CD8-positive, alpha-beta T cell (primary cell): ENCODE measurements at regions of chr3 and their contacts with region 1.

Region 1: DNA sequence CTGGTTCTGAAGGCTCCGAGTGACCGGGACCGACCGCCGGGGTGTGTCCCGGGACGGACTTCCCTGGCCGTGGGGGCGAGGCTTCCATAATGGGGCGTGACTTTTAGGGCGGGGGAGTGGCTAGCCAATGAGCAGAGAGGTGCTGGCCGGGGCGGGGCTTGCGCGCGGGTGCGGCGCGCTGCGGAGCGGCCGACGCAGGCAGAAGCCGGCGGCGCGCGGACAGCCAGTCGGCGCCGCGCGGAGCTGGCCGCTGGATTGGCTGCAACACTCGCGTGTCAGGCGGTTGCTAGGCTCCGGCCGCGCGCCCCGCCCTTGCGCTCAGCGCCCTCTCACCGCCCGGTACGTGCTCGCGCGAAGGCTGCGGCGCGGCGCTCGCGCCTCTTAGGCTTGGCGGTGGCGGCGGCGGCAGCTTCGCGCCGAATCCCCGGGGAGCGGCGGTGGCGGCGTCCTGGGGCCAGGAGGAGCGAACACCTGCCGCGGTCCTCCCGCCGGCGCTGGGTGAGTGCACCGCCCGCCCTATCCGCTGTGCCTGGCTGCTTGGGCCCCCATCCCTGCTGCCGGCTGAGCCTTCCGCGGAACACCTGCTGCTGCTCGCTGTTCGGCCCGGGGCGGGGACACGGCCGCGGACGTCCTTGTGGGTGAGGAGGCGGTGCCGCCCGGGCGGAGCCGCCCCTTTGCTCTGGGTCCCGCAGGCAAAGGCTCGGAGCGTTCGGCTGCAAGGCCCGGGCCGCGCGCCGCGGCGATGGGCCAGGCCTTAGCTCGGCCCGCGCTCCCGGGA is at the start of gene DAG1:
- DNase-seq: peak; percentile 89 to 99 (median 95)
- ATAC-seq: peak; percentile 85
- H3K4me3 ChIP-seq: peak within 1 kb of the TSS; percentile 83 to 97
- H3K4me3 Mint-ChIP-seq: peak within 1 kb of the TSS; percentile 88
- H3K27ac ChIP-seq: peak within 1 kb of the TSS; percentile 86 to 87
- H3K27ac Mint-ChIP-seq: peak within 1 kb of the TSS; percentile 94
- H3K4me1 ChIP-seq: peaks cover 21% of the 10 kb centered on the region
- H3K4me1 Mint-ChIP-seq: peaks cover 24% of the 10 kb centered on the region
- H3K27me3 ChIP-seq: no peaks in the 10 kb centered on the region
- H3K27me3 Mint-ChIP-seq: no peaks in the 10 kb centered on the region
- CTCF ChIP-seq: no peak
- total RNA-seq, gene DAG1: 17.0 to 19.9 TPM

Region 2: GRCh38 chr3:49171119-49171774 is 298.9 kb before region 1 on chr3 and contains the start of gene KLHDC8B:
- CTCF ChIA-PET with region 1: no interaction called
- POLR2A ChIA-PET with region 1: no interaction called
- intact Hi-C with region 1: no loop called
- DNase-seq: peak; percentile 68 to 90 (median 84)
- ATAC-seq: peak; percentile 85
- H3K4me3 ChIP-seq: peak within 1 kb of the TSS; percentile 72 to 88
- H3K4me3 Mint-ChIP-seq: peak within 1 kb of the TSS; percentile 89
- H3K27ac ChIP-seq: peak within 1 kb of the TSS; percentile 3 to 40
- H3K27ac Mint-ChIP-seq: peak within 1 kb of the TSS; percentile 79
- H3K4me1 ChIP-seq: peaks cover 24% of the 10 kb centered on the region
- H3K4me1 Mint-ChIP-seq: peaks cover 25% of the 10 kb centered on the region
- H3K27me3 ChIP-seq: no peaks in the 10 kb centered on the region
- H3K27me3 Mint-ChIP-seq: no peaks in the 10 kb centered on the region
- CTCF ChIP-seq: peak; percentile 97
- total RNA-seq, gene KLHDC8B: 1.1 to 1.6 TPM

Region 3: GRCh38 chr3:49428697-49429100 is 41.4 kb before region 1 on chr3:
- CTCF ChIA-PET with region 1: no interaction called
- POLR2A ChIA-PET with region 1: interaction called, 6 read pairs
- intact Hi-C with region 1: loop called (anchors 1 kb)
- DNase-seq: no peak
- ATAC-seq: peak; percentile 2
- H3K4me3 ChIP-seq: peak overlapping the region; percentile 63 to 85
- H3K4me3 Mint-ChIP-seq: peak overlapping the region; percentile 89
- H3K27ac ChIP-seq: peak overlapping the region; percentile 70 to 86
- H3K27ac Mint-ChIP-seq: peak overlapping the region; percentile 89
- H3K4me1 ChIP-seq: peaks cover 10% of the 10 kb centered on the region
- H3K4me1 Mint-ChIP-seq: peaks cover 14% of the 10 kb centered on the region
- H3K27me3 ChIP-seq: no peaks in the 10 kb centered on the region
- H3K27me3 Mint-ChIP-seq: no peaks in the 10 kb centered on the region
- CTCF ChIP-seq: no peak

Region 4: DNA sequence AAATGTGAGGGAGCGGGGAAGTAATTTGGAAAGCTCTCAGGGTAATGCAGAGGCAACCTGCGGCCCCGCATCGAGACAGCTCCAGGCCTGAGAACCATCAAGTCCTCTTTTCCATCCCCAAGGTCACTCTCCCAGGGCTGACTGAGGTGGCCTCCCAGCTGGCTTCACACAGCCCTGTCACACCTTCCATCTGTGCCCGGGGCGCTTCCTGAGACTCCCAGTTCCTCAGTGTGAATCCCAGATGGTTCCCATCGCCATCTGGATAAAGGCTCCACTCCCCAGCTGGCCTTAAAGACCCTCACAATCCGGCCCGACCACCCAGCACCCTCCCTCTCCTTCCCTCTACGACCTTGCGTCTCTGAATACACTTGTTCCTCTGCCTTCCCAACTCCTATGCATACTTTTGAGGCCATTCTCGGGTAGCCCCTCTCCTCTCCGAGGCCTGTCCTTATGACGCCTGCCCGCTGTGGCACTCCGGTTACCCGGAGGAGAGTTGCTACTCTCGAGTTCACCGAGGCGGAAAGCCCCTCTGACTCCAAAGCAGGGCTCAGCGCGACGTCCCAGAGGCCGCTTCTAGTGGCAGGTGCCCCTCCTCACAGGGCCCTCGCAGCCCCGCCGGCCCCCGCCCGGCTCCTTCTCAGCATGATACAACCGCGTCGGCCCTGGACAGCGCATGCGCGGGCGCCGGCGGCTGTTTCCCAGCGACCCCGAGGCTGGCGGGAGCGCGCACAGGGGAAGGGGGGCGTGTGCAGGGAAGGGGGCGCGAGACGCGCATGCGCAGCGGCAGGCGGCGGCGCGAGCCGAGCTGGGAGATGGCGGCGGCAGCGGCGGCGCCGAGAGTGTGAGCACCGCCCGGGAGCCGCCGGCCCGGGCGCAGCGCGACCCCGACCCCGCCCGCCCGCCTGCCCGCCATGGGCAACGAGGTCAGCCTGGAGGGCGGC is 83.8 kb after region 1 on chr3 and contains the start of gene BSN:
- CTCF ChIA-PET with region 1: no interaction called
- POLR2A ChIA-PET with region 1: no interaction called
- intact Hi-C with region 1: loop called in 1 of 2 experiments (anchors 2 kb)
- DNase-seq: peak; percentile 72 to 95 (median 93)
- ATAC-seq: peak; percentile 90
- H3K4me3 ChIP-seq: peak within 1 kb of the TSS; percentile 65 to 97
- H3K4me3 Mint-ChIP-seq: peak within 1 kb of the TSS; percentile 89
- H3K27ac ChIP-seq: peak within 1 kb of the TSS in 1 of 2 experiments; percentile 38
- H3K27ac Mint-ChIP-seq: peak within 1 kb of the TSS; percentile 64
- H3K4me1 ChIP-seq: peaks cover 13% of the 10 kb centered on the region
- H3K4me1 Mint-ChIP-seq: peaks cover 17% of the 10 kb centered on the region
- H3K27me3 ChIP-seq: peaks cover 0 to 2% of the 10 kb centered on the region in 2 experiments
- H3K27me3 Mint-ChIP-seq: peaks cover 21% of the 10 kb centered on the region
- CTCF ChIP-seq: no peak
- total RNA-seq, gene BSN: 0.17 to 0.35 TPM

Region 5: GRCh38 chr3:49929331-49930240 is 459.5 kb after region 1 on chr3 and contains the start of gene MON1A:
- CTCF ChIA-PET with region 1: no interaction called
- POLR2A ChIA-PET with region 1: no interaction called
- intact Hi-C with region 1: no loop called
- DNase-seq: peak; percentile 64 to 91 (median 85)
- ATAC-seq: peak; percentile 94
- H3K4me3 ChIP-seq: peak within 1 kb of the TSS; percentile 80 to 99
- H3K4me3 Mint-ChIP-seq: peak within 1 kb of the TSS; percentile 82
- H3K27ac ChIP-seq: peak within 1 kb of the TSS; percentile 68 to 72
- H3K27ac Mint-ChIP-seq: peak within 1 kb of the TSS; percentile 79
- H3K4me1 ChIP-seq: peaks cover 12% of the 10 kb centered on the region
- H3K4me1 Mint-ChIP-seq: peaks cover 34% of the 10 kb centered on the region
- H3K27me3 ChIP-seq: no peaks in the 10 kb centered on the region
- H3K27me3 Mint-ChIP-seq: no peaks in the 10 kb centered on the region
- CTCF ChIP-seq: no peak
- total RNA-seq, gene MON1A: 1.2 TPM

Region 6: GRCh38 chr3:49939858-49940666 is 469.9 kb after region 1 on chr3 and contains the start of gene RBM6:
- CTCF ChIA-PET with region 1: no interaction called
- POLR2A ChIA-PET with region 1: no interaction called
- intact Hi-C with region 1: loop called in 1 of 2 experiments (anchors 2 kb)
- DNase-seq: peak; percentile 82 to 97 (median 93)
- ATAC-seq: peak; percentile 98
- H3K4me3 ChIP-seq: peak within 1 kb of the TSS; percentile 78 to 98
- H3K4me3 Mint-ChIP-seq: peak within 1 kb of the TSS; percentile 99
- H3K27ac ChIP-seq: peak within 1 kb of the TSS; percentile 67 to 99
- H3K27ac Mint-ChIP-seq: peak within 1 kb of the TSS; percentile 98
- H3K4me1 ChIP-seq: peaks cover 15% of the 10 kb centered on the region
- H3K4me1 Mint-ChIP-seq: peaks cover 30% of the 10 kb centered on the region
- H3K27me3 ChIP-seq: no peaks in the 10 kb centered on the region
- H3K27me3 Mint-ChIP-seq: no peaks in the 10 kb centered on the region
- CTCF ChIP-seq: no peak
- total RNA-seq, gene RBM6: 92.1 to 95.0 TPM